A549 (cell line): ENCODE measurements at regions of chr9 and their contacts with region 1.

Region 1: DNA sequence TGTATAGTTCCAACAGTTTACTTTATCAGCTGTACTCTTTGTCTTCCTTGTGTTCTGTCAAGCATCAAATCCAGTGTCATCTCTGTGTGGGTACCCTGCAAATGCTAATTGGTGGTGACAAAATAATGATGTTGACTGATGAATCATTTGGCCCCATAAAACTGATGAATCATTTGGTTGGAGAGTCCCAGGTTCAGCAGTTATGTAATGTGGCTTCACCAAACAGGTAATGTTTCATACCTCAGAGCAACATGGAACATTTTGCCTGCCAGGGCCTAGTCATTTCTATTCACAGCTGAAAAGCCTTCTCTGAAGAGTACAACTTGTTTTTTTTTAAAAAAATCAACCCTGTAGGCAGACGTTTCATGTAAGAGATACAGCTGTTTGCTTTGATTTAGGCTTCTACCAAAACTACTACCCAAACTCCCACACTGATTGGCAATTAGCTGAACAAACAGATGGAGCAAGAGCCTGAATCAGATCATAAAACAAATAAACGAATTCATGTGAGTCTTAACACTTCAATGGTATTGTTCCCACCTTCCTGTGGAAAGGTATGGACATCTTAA is 23.6 kb upstream of the CTSV start:
- DNase-seq: no peak
- ATAC-seq: no peak
- H3K4me3 ChIP-seq: no peak overlapping the region
- H3K27ac ChIP-seq: no peak overlapping the region
- H3K4me1 ChIP-seq: no peaks in the 10 kb centered on the region
- CTCF ChIP-seq: no peak
- EP300 ChIP-seq: no peak
- POLR2A ChIP-seq: no peak
- RAD21 ChIP-seq: no peak

Region 2: GRCh38 chr9:97038909-97039781 is 23.4 kb before region 1 on chr9 and contains the start of gene CTSV:
- CTCF ChIA-PET with region 1: no interaction called
- POLR2A ChIA-PET with region 1: interaction called, 11 read pairs
- DNase-seq: peak; percentile 87 to 92
- ATAC-seq: peak; percentile 98 to 100
- H3K4me3 ChIP-seq: peak within 1 kb of the TSS; percentile 69
- H3K27ac ChIP-seq: peak within 1 kb of the TSS; percentile 71 to 83
- H3K4me1 ChIP-seq: no peaks in the 10 kb centered on the region
- CTCF ChIP-seq: no peak
- EP300 ChIP-seq: no peak
- POLR2A ChIP-seq: peak; percentile 53
- RAD21 ChIP-seq: no peak
- polyA plus RNA-seq, gene CTSV: 11.3 and 13.4 TPM in 2 replicates

Region 3: DNA sequence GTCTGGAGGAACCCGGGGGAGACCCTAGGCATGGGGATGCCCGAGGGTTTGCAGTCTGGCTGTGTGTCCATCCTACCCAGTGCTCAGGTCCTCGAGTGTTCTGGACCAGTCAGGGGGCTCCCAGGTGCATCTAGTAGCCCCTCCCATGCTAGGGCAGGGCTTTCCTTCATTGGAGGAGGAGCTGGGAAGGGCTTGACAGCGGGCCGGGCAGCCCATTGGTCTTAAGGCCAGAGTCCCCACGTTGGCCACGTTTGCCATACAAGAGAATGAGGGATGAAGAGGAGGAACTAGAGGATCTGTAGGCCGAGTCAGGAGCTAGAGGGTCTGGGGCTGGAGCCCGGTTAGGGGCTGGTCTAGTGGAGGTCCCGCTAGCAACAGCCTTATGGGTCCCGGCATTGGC is 13.7 kb after region 1 on chr9:
- CTCF ChIA-PET with region 1: no interaction called
- POLR2A ChIA-PET with region 1: no interaction called
- DNase-seq: no peak
- ATAC-seq: no peak
- H3K4me3 ChIP-seq: no peak overlapping the region
- H3K27ac ChIP-seq: no peak overlapping the region
- H3K4me1 ChIP-seq: no peaks in the 10 kb centered on the region
- CTCF ChIP-seq: no peak
- EP300 ChIP-seq: no peak
- POLR2A ChIP-seq: no peak
- RAD21 ChIP-seq: no peak